ENCODE measurements at regions of chr2 and their contacts with region 1.

Region 1: DNA sequence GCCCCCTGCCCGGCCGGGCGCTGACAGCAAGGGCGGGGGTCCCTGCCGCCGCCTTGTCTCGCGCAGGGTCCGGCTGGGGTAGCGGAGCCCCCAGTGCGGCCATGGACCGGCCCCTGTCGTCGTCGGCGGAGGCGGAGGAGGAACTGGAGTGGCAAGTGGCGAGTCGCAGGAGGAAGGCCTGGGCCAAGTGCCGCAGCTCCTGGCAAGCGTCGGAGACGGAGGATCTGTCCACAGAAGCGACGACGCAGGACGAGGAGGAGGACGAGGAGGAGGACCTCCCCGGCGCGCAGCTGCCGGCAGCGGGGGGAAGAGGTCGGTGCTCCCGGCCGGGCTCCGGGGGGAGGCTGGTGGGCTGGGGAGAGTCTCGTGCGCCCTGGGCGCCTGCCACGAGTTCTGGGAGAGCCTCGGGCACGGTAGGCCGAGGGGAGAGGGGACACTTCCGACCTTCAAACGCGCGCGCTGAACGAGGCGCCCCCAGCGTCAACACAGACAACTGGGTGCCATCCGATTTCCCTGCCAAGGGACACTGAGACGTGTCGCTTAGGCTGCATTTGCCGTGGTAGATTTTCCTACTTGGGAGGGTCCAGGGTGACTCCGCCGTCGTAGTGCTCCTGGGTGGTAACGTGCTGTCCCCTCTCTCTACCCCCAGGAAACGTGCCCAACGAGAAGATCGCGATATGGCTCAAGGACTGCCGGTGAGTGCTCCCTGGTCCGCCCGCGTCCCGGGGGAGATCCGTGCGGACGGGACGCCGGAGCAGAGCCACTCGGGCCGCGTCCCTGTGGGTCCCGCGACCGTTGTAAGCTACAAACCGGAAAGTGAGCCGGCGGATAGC is 652 bp downstream of the ITPRID2 start:
- DNase-seq: peak; percentile 69
- ATAC-seq: peak; percentile 66; the same call in 1 of the 2 replicates
- H3K4me3 ChIP-seq: peak overlapping the region; percentile 74 to 81
- H3K27ac ChIP-seq: peak overlapping the region; percentile 99
- H3K4me1 ChIP-seq: peaks cover 54 to 79% of the 10 kb centered on the region in 2 experiments
- H3K27me3 ChIP-seq: no peaks in the 10 kb centered on the region
- CTCF ChIP-seq: 0 out of 6 replicates have a peak, but pooled peaks of 2 of the 3 experiments have one; percentile 10 to 26
- POLR2A ChIP-seq: no peak
- RAD21 ChIP-seq: no peak; the same call in 1 of the 2 replicates

Region 2: GRCh38 chr2:181780047-181780651 is 112.0 kb before region 1 on chr2:
- CTCF ChIA-PET with region 1: interaction called, 3 read pairs
- POLR2A ChIA-PET with region 1: interaction called, 25 read pairs
- RAD21 ChIA-PET with region 1: no interaction called
- intact Hi-C with region 1: no loop called
- DNase-seq: no peak
- ATAC-seq: no peak
- H3K4me3 ChIP-seq: no peak overlapping the region
- H3K27ac ChIP-seq: peak overlapping the region; percentile 92
- H3K4me1 ChIP-seq: peaks cover 85 to 94% of the 10 kb centered on the region in 2 experiments
- H3K27me3 ChIP-seq: no peaks in the 10 kb centered on the region
- CTCF ChIP-seq: no peak
- POLR2A ChIP-seq: no peak
- RAD21 ChIP-seq: no peak

Region 3: GRCh38 chr2:181790716-181791649 is 101.2 kb before region 1 on chr2:
- CTCF ChIA-PET with region 1: interaction called, 3 read pairs
- POLR2A ChIA-PET with region 1: interaction called, 25 read pairs
- RAD21 ChIA-PET with region 1: no interaction called
- intact Hi-C with region 1: loop called (anchors 2 kb)
- DNase-seq: peak; percentile 98
- ATAC-seq: peak; percentile 87
- H3K4me3 ChIP-seq: peak overlapping the region in 1 of 2 experiments; percentile 14; a peak in 2 of 4 replicates
- H3K27ac ChIP-seq: peak overlapping the region; percentile 92
- H3K4me1 ChIP-seq: peaks cover 54 to 72% of the 10 kb centered on the region in 2 experiments
- H3K27me3 ChIP-seq: no peaks in the 10 kb centered on the region
- CTCF ChIP-seq: no peak
- POLR2A ChIP-seq: no peak
- RAD21 ChIP-seq: peak; percentile 45

Region 4: GRCh38 chr2:181876614-181877063 is 15.5 kb before region 1 on chr2:
- CTCF ChIA-PET with region 1: interaction called, 5 read pairs
- POLR2A ChIA-PET with region 1: interaction called, 40 read pairs
- RAD21 ChIA-PET with region 1: no interaction called
- intact Hi-C with region 1: loop called (anchors 1 kb)
- DNase-seq: peak; percentile 99
- ATAC-seq: peak; percentile 95
- H3K4me3 ChIP-seq: peak overlapping the region; percentile 6 to 21; a peak in 3 of 4 replicates
- H3K27ac ChIP-seq: peak overlapping the region; percentile 91
- H3K4me1 ChIP-seq: peaks cover 32 to 73% of the 10 kb centered on the region in 2 experiments
- H3K27me3 ChIP-seq: no peaks in the 10 kb centered on the region
- CTCF ChIP-seq: no peak
- POLR2A ChIP-seq: no peak
- RAD21 ChIP-seq: peak; percentile 43; the same call in 1 of the 2 replicates

Measured in HCT116 (cell line).